ENCODE measurements at regions of chr20 and their contacts with region 1.

Region 1: DNA sequence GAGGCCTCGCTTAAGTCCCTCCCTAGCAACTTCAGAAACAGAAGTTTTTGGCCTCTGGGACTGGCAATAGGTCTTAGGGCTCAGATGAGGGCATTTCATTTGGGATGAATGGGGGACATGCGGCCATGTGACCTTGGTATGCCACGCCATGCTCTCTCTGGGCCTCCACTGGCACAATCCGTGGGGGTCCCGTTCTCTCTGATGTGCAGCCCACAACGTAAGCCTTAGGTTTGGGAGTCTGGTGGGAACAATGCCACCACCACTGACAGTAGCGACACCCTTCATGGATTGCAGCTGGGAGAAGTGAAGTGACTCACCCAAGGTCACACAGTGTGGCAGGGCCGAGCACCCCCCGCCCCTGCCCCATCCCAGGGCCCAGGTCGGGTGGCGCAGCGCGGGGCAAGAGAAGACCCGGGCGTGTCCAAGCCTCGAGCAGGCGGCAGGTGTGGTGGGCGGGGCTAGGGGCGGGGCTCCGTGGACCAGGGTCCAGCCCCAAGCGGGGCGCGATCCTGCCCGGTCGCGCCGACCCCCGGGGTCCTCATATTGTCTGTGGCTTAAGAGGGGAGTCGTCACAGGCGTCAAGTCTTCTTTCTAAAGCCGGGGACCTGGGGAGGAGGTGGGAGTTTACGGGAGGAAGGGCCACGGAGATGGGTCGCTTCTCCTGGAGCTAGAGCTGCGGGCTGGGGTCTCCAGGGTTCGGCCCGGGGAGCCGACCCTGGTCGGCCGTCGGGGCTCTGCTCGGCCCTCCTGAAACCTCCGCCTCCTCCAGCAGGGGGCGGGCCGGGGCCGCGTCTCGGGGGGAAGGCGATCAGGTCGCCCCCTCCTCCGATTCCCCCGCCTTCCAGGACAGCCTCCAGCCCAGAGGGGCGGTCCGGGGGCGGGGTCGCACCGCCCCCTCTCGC is 698 bp upstream of the CEBPB start:
- DNase-seq: peak in 1 of 2 donors; percentile 94
- H3K4me3 ChIP-seq: peak overlapping the region; percentile 99
- H3K27ac ChIP-seq: peak overlapping the region; percentile 99 to 100
- H3K4me1 ChIP-seq: peaks cover 11 to 17% of the 10 kb centered on the region in 2 donors
- H3K27me3 ChIP-seq: no peaks in the 10 kb centered on the region
- CTCF ChIP-seq: peak; percentile 83 to 95 (median 95)

Region 2: DNA sequence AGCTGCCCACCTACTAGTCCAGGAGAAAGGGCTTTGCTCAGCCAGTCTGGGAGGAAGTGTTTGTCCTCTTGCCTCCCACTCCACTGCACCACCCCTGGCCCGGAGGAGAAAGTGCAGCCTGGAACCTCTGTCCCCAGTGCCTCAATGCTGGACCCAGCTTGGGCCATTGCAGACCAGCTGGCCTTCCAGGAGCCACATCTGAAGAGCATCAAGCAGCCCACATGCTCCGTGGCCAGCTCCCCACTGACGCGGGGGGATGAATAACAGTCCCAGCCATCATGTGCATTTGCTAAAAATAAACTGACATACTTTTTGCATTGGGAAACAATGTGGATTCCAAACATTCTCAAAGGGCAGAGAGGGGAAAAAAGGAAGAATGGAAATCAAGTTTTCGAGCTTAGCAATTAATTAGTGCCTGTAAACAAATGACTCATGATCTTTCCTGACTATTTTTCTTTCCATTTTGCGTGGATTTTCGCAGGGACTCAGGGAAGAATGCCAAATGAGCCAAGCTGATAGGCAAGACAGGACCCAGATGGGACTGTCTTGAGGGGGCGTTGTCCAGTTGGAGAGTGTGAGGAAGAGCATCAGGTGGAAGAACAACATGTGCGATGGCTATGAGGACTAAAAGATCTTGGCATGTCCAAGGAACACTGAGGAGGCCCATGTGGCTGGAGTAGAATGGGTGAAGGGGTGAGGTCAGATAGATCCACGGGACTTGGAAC is 34.8 kb after region 1 on chr20:
- intact Hi-C with region 1: loop called (anchors 2 kb)
- DNase-seq: peak; percentile 52 to 93
- H3K4me3 ChIP-seq: no peak overlapping the region
- H3K27ac ChIP-seq: peak overlapping the region; percentile 90 to 92
- H3K4me1 ChIP-seq: peaks cover 4 to 27% of the 10 kb centered on the region in 2 donors
- H3K27me3 ChIP-seq: no peaks in the 10 kb centered on the region
- CTCF ChIP-seq: peak in 2 of 3 experiments; percentile 27 to 37

Region 3: GRCh38 chr20:50308513-50309279 is 118.8 kb after region 1 on chr20:
- intact Hi-C with region 1: loop called (anchors 2 kb)
- DNase-seq: peak; percentile 84 to 98
- H3K4me3 ChIP-seq: peak overlapping the region in 1 of 2 donors; percentile 31
- H3K27ac ChIP-seq: peak overlapping the region; percentile 85 to 89
- H3K4me1 ChIP-seq: peaks cover 19 to 37% of the 10 kb centered on the region in 2 donors
- H3K27me3 ChIP-seq: no peaks in the 10 kb centered on the region
- CTCF ChIP-seq: peak in 1 of 3 experiments; percentile 8

Region 4: GRCh38 chr20:50379049-50379990 is 189.4 kb after region 1 on chr20:
- intact Hi-C with region 1: loop called (anchors 2 kb)
- DNase-seq: peak; percentile 78 to 97
- H3K4me3 ChIP-seq: peak overlapping the region in 1 of 2 donors; percentile 36
- H3K27ac ChIP-seq: peak overlapping the region; percentile 65 to 81
- H3K4me1 ChIP-seq: peaks cover 8 to 37% of the 10 kb centered on the region in 2 donors
- H3K27me3 ChIP-seq: no peaks in the 10 kb centered on the region
- CTCF ChIP-seq: no peak

Region 5: GRCh38 chr20:50460460-50461267 is 270.7 kb after region 1 on chr20:
- intact Hi-C with region 1: loop called (anchors 1 kb)
- DNase-seq: peak; percentile 58 to 96
- H3K4me3 ChIP-seq: no peak overlapping the region
- H3K27ac ChIP-seq: peak overlapping the region; percentile 17 to 53
- H3K4me1 ChIP-seq: peaks cover 3 to 23% of the 10 kb centered on the region in 2 donors
- H3K27me3 ChIP-seq: no peaks in the 10 kb centered on the region
- CTCF ChIP-seq: peak; percentile 94 to 98 (median 96)

Region 6: GRCh38 chr20:50731055-50731871 is 541.3 kb after region 1 on chr20 and contains the start of gene PARD6B:
- intact Hi-C with region 1: loop called (anchors 10 kb)
- DNase-seq: peak; percentile 93 to 98
- H3K4me3 ChIP-seq: peak within 1 kb of the TSS; percentile 66 to 89
- H3K27ac ChIP-seq: peak within 1 kb of the TSS; percentile 71 to 88
- H3K4me1 ChIP-seq: peaks cover 8 to 13% of the 10 kb centered on the region in 2 donors
- H3K27me3 ChIP-seq: no peaks in the 10 kb centered on the region
- CTCF ChIP-seq: no peak
- total RNA-seq, gene PARD6B: 1.2 TPM

Measured in ascending aorta (tissue), 2 donors.